Lower leg skin (tissue), 4 donors: ENCODE measurements at regions of chr17 and their contacts with region 1.

Region 1: DNA sequence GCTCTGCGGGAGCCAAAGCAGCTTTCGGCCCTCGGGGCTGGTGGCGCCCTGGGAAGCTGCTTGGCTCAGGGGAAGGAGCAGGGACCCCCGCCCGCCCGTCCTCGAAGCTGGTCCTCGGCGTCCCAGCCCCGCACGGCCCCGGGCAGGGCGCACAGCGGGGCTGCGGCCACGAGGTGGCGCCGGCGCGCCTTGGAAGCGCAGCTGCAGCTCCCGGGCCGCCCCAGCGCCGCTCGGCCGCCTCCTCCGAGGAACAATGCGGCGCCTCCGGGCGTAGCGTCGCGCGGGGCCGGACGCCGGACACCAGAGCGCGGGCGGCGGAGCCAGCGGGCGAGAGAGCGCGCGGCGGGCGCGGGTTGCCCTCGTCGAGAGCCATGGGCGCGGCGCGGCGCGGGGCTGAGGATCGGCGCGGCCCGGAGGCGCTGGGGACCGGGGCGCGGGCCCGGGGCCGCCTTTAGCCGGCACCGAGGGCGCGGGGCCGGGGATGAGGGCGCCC is at the start of gene MGAT5B:
- DNase-seq: peak; percentile 31 to 90
- H3K4me3 ChIP-seq: no peak within 1 kb of the TSS
- CTCF ChIP-seq: no peak
- POLR2A ChIP-seq: no peak
- total RNA-seq, gene MGAT5B: 0.19 to 0.47 TPM in 2 of 4 donors, not detected in the others

Region 2: GRCh38 chr17:77054936-77055335 is 186.7 kb after region 1 on chr17:
- intact Hi-C with region 1: loop called (anchors 5 kb)
- DNase-seq: no peak
- H3K4me3 ChIP-seq: no peak overlapping the region
- CTCF ChIP-seq: no peak
- POLR2A ChIP-seq: no peak

Region 3: DNA sequence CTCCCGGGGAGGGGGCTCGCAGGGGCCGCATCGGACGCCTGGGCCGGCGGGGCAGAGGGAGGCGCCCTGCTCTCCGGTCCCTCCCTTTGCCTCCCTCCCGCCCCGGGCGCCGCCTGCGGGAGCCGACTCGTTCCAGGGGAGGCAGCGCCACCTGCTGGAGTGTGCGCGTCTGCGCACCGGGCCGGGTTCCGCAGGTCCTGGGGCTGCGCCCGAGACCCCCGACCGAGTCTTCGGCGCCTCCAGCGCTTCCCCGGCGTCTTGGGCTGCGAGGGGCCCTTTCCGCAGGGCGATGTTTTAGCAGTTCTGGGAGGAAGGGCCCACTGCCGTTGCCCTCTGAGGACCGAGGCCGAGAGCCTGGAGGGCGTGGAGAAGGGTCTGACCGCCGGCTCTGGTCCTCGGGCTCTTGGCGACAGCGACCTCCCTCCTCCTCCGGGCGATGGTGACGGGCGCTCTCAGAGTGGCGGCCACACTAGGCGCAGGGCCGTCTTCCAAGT is 378.9 kb after region 1 on chr17:
- intact Hi-C with region 1: loop called (anchors 10 kb)
- DNase-seq: peak; percentile 63 to 96
- H3K4me3 ChIP-seq: no peak overlapping the region
- CTCF ChIP-seq: peak in 1 of 3 donors; percentile 88
- POLR2A ChIP-seq: no peak